Posterior cingulate gyrus (tissue), 11 donors: ENCODE measurements at regions of chr3 and their contacts with region 1.

Region 1: DNA sequence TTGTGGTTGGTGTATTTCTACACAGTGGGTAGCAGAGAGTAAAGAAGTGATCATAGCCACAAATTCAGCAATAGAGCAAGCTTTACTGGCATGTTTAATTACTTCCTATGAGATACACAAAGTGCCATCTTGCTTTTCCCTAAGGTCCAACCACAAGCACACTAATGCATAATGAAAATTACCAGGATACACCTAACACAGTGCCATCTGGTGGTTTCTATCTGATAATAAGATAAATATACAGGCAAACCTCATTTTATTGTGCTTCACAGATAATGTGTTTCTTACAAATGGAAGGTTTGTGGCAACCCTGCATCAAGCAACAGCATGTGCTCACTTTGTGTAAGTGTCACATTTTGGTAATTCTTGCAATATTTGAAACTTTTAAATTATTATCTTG is 223.0 kb downstream of the NSUN3 start:
- DNase-seq: no peak

Region 2: DNA sequence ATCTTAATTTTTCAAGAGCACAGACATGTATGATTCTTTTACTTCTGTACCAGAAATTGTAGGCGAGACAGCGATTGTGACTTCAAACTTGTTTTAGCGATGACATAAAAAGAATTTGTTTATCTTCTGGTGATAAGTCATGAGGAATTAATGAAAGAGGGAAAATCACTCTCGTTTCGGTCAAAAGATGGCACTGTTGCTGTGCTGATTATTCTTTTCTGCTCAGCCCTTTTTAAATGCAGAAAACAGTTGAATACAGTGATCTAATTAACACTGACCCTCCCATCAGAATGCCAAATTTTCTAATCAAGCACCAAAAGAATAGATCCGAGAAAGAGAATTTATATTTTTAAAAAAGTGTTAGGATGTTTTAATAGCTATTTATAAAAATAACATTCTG is 170.4 kb before region 1 on chr3:
- intact Hi-C with region 1: loop called (anchors 5 kb)
- DNase-seq: no peak

Region 3: DNA sequence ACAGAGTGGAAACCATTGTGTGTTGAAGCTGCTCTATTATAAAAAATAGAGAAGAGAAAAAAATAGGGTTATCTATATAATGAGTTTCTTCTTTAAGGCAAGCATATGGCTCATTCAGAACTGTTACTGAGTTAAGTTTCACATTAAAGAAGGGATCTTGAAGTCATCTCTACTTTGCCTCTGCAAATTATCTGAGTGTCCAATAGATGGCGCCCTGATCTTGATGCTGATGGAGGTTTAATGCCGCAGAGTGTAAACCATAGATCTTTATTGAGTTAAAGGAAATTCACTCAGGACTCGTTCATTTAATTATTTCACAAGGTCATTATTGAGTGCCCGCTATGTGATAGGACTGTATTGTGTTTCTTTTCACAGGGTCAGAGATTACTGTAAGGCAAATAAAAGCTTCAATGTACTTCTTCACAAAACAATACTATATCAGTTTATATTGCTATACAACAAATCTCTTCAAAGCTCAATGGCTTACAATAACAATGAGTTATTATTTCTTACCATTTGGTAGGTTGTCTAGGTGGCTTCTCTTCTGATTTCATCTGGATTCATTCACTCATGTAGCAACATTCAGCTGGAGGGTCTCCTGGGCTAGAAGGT is 51.6 kb before region 1 on chr3:
- intact Hi-C with region 1: no loop called
- DNase-seq: no peak

Region 4: GRCh38 chr3:95184038-95184437 is 898.2 kb after region 1 on chr3:
- intact Hi-C with region 1: no loop called
- DNase-seq: peak in 2 of 10 donors; percentile 16 to 67